Calu3 (cell line): ENCODE measurements at regions of chr4 and their contacts with region 1.

Region 1: DNA sequence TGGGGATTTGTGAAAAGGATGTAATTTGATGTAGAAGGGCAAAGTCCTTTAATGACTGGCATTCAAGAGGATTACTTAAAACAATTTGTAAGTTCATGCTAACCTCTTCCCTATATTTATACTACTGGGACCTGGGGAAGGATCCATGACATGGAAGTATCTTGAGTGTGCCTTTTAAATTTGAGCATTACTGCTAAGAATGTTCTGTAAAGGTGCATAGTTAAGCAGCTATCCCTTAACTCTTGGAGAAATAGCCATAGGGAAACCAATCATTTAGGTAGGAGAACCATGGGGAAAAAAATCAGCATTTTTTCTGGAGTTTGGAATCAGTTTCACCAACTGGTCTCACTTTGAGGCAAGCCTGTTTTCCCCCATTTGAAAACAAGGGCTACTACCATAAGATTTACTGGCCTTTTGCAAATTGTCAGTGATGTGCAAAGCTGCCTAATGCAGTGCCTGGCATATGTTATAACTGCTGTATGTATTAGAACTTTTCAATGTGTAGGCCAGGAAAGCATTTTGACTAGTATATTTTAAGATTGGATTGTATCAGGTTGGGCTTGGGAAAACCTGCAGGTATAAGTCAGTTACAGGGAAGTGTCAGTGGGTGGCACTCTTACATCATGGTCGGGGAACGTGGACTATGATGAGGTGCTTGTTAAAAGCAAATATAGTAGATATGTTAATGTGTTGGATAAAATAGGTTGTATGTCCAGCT is 72.1 kb downstream of the PRSS12 start:
- DNase-seq: peak; percentile 58
- H3K4me3 Mint-ChIP-seq: peak overlapping the region; percentile 80
- H3K27ac Mint-ChIP-seq: peak overlapping the region; percentile 69
- H3K4me1 Mint-ChIP-seq: peaks cover 36% of the 10 kb centered on the region
- H3K27me3 Mint-ChIP-seq: no peaks in the 10 kb centered on the region
- CTCF ChIP-seq: no peak

Region 2: DNA sequence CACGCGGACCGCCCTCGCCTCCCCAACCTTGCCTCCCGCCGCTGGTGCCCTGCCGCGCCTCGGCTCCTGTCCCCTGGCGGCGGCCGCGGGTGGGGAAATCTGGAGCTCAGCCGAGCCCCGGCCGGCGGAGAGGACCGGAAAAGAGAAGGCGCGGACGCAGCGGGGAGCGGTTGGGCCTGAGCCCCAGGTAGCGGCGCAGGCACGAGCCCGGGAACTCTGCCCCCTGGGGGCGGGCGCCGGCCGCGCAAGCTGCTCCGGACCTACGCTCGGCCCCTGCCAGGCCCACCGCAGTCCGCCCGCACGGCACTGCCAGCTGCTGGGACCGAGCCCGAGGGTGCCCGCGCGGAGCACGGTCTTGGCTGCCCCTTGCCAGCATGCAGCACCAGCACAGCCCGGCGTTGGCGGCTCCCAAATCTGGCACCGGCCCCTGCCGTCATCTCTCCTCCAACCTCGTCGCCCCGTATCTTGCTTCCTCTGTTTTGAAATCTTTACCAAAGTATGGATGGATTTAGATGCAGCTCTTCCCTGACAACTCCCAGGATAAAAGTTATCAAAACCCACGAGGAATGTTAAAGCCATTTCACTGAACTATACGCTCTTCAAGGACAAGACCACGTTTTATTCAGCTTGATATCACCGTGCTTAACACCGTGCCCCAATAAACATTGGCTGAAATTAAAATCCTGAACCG is 72.3 kb after region 1 on chr4 and contains the start of gene PRSS12:
- CTCF ChIA-PET with region 1: interaction called, 9 read pairs
- intact Hi-C with region 1: loop called (anchors 1 kb)
- DNase-seq: peak; percentile 93
- H3K4me3 Mint-ChIP-seq: peak within 1 kb of the TSS; percentile 93
- H3K27ac Mint-ChIP-seq: peak within 1 kb of the TSS; percentile 94
- H3K4me1 Mint-ChIP-seq: peaks cover 15% of the 10 kb centered on the region
- H3K27me3 Mint-ChIP-seq: no peaks in the 10 kb centered on the region
- CTCF ChIP-seq: peak; percentile 67
- total RNA-seq, gene PRSS12: 44.4 and 48.7 TPM in 2 replicates

Region 3: DNA sequence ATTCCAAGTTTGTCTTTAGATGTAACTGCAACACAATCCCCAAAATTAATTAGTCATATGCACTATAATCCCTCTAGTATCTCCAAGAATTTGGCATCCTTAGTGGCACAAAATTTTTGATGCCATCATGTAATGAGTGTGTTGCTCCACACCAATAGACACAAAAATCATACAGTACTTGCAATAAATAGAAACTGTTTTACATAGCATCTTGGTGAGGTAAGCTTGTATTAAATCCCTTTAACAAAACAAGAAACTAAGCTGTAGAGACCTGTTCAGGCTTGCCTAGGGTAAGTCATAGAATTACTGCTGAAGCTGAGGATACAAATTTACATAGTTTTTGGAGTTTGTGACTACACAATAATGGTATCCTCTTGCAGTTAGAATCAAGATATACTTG is 136.7 kb after region 1 on chr4:
- CTCF ChIA-PET with region 1: no interaction called
- intact Hi-C with region 1: loop called (anchors 5 kb)
- DNase-seq: no peak
- H3K4me3 Mint-ChIP-seq: no peak overlapping the region
- H3K27ac Mint-ChIP-seq: no peak overlapping the region
- H3K4me1 Mint-ChIP-seq: no peaks in the 10 kb centered on the region
- H3K27me3 Mint-ChIP-seq: no peaks in the 10 kb centered on the region
- CTCF ChIP-seq: no peak